ENCODE measurements at regions of chr11 and their contacts with region 1.

Region 1: DNA sequence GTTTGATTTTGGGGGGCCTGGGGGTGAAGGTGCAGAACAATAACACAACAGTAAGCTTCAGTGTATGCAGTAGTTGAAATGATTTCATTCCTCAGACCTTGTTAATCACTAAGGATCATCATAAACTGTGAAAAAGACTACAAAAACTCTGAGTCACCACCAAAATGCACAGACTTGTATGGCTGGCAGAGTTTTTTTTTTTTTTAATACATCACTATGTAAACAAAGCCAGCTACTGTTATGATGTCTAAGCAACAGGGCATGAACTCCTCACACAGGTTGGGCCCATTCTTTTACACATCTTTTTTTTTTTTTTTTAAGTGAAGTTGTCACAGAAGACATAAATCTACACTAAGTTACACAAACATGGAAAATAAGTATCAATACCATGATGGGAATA is 311.9 kb downstream of the GUCY1A2 start:
- DNase-seq: peak; percentile 95
- ATAC-seq: peak; percentile 99
- H3K4me3 ChIP-seq: no peak overlapping the region
- H3K27ac ChIP-seq: peak overlapping the region; percentile 60
- H3K4me1 ChIP-seq: peaks cover 21% of the 10 kb centered on the region
- H3K27me3 ChIP-seq: no peaks in the 10 kb centered on the region
- CTCF ChIP-seq: no peak

Region 2: DNA sequence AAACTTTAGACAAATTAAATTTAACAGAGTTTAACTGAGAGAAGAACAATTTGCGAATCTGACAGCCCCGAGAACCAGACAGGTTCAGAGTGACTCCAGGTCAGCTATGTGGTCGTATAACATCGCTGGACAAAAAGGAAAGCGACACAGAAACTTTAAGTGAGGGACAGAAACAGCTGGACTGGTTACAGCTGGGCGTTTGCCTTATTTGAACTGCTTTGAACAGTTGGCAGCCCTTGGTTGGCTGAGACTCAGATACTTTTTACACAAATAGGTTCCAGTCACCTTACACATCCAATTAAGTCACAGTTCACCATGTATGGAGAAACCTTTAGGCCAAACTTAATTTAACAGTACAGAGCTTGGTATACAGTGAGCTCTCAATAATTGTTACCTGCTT is 125.0 kb before region 1 on chr11:
- CTCF ChIA-PET with region 1: no interaction called
- POLR2A ChIA-PET with region 1: no interaction called
- intact Hi-C with region 1: no loop called
- DNase-seq: no peak
- ATAC-seq: no peak
- H3K4me3 ChIP-seq: no peak overlapping the region
- H3K27ac ChIP-seq: no peak overlapping the region
- H3K4me1 ChIP-seq: no peaks in the 10 kb centered on the region
- H3K27me3 ChIP-seq: no peaks in the 10 kb centered on the region
- CTCF ChIP-seq: no peak

Region 3: DNA sequence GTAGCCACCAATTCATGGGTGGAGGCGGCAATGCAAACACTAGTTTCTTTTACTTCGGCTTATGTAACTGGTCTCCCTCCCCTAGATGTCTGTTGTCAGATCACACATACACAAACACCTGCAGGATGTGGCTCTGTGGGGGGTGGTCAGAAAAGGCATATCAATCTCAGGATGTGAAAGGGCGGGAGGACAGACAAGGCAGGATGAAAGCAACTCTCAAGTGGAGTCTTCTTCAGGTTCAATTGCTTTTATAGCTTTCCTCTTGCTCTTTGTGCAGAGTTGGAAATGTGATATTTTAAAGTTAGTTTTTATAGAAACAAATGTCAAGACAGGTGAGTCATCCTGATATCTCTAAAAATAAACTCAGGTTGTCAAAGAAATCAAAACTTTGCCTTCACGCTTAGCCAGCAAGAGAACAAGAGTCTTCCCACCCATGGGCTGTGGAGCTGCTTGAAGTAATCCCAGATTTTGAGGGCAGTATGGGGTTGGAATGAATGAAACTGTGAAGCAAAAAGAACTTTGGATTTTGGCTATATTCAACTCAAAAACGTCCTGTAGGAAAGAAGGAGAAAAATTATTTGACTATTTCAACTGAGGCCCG is 111.5 kb before region 1 on chr11:
- CTCF ChIA-PET with region 1: no interaction called
- POLR2A ChIA-PET with region 1: no interaction called
- intact Hi-C with region 1: loop called (anchors 2 kb)
- DNase-seq: peak; percentile 73
- ATAC-seq: peak; percentile 90
- H3K4me3 ChIP-seq: no peak overlapping the region
- H3K27ac ChIP-seq: peak overlapping the region; percentile 28
- H3K4me1 ChIP-seq: peaks cover 13% of the 10 kb centered on the region
- H3K27me3 ChIP-seq: no peaks in the 10 kb centered on the region
- CTCF ChIP-seq: no peak

Region 4: GRCh38 chr11:106621484-106621883 is 84.9 kb before region 1 on chr11:
- CTCF ChIA-PET with region 1: no interaction called
- POLR2A ChIA-PET with region 1: interaction called, 11 read pairs
- intact Hi-C with region 1: no loop called
- DNase-seq: no peak
- ATAC-seq: no peak
- H3K4me3 ChIP-seq: no peak overlapping the region
- H3K27ac ChIP-seq: no peak overlapping the region
- H3K4me1 ChIP-seq: peaks cover 12% of the 10 kb centered on the region
- H3K27me3 ChIP-seq: no peaks in the 10 kb centered on the region
- CTCF ChIP-seq: no peak

Measured in PC-3 (cell line).